Activated CD4-positive, alpha-beta memory T cell treated with anti-CD3 and anti-CD28 coated beads for 36 hours (primary cell): ENCODE measurements at regions of chr21 and their contacts with region 1.

Region 1: GRCh38 chr21:34129039-34129891 is 55.9 kb downstream of the MRPS6 start:
- DNase-seq: peak; percentile 84
- H3K4me3 Mint-ChIP-seq: peak overlapping the region; percentile 59
- H3K27ac Mint-ChIP-seq: peak overlapping the region; percentile 92
- H3K4me1 Mint-ChIP-seq: peaks cover 70% of the 10 kb centered on the region
- H3K27me3 Mint-ChIP-seq: no peaks in the 10 kb centered on the region

Region 2: DNA sequence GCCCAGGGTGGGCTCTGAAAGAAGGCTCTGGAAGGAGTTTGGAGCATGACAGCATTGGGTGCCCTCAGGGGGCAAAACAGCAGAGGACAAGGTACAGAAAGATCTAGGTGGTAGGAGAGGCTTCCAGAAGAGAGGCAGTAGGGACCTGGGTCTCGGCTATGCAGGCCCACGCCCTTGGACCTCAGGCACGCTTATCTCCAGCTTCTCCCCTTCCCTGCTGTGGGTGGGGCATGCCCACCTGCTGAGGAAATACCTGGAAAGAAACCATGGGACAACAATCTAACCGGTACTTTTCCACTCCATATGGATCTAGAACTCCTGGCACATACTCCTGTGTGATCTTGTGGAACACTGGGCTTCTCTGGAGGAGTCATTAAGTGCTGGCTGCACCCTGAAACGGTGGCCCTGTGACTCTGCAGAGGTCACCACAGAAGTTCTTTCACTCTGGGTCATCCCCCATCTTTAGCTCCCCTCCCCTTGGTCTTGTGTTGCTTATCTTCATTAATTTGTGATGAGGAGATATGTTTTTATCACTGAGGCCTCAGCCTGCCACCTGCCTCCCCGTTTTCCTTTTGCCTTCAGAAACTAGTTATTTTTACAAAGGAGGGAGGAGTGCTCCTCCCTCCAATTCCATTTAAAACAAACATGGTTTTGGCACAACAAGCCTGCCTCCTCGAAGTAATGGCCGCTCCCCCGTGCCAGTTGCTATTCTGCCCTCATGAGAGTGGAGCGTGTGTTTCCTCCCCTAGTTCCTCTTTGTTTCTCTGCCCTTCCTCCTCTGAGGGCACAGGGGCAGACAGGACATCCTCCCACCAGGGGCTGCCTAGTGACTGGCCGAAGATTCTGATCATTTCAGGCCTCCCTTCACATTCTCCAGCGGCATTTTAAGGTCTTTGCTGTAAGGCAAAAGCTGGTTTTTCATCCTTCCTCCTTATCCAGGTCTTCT is 135.7 kb before region 1 on chr21:
- CTCF ChIA-PET with region 1: no interaction called
- POLR2A ChIA-PET with region 1: no interaction called
- intact Hi-C with region 1: no loop called
- DNase-seq: no peak
- H3K4me3 Mint-ChIP-seq: no peak overlapping the region
- H3K27ac Mint-ChIP-seq: no peak overlapping the region
- H3K4me1 Mint-ChIP-seq: peaks cover 12% of the 10 kb centered on the region
- H3K27me3 Mint-ChIP-seq: no peaks in the 10 kb centered on the region

Region 3: GRCh38 chr21:34046917-34047316 is 82.3 kb before region 1 on chr21:
- CTCF ChIA-PET with region 1: no interaction called
- POLR2A ChIA-PET with region 1: no interaction called
- intact Hi-C with region 1: no loop called
- DNase-seq: no peak
- H3K4me3 Mint-ChIP-seq: no peak overlapping the region
- H3K27ac Mint-ChIP-seq: no peak overlapping the region
- H3K4me1 Mint-ChIP-seq: peaks cover 9% of the 10 kb centered on the region
- H3K27me3 Mint-ChIP-seq: peaks cover 2% of the 10 kb centered on the region

Region 4: GRCh38 chr21:34085129-34085528 is 44.1 kb before region 1 on chr21:
- CTCF ChIA-PET with region 1: no interaction called
- POLR2A ChIA-PET with region 1: no interaction called
- intact Hi-C with region 1: loop called (anchors 5 kb)
- DNase-seq: no peak
- H3K4me3 Mint-ChIP-seq: no peak overlapping the region
- H3K27ac Mint-ChIP-seq: no peak overlapping the region
- H3K4me1 Mint-ChIP-seq: peaks cover 60% of the 10 kb centered on the region
- H3K27me3 Mint-ChIP-seq: no peaks in the 10 kb centered on the region

Region 5: GRCh38 chr21:34105947-34106541 is 23.2 kb before region 1 on chr21:
- CTCF ChIA-PET with region 1: interaction called, 7 read pairs
- POLR2A ChIA-PET with region 1: no interaction called
- intact Hi-C with region 1: loop called (anchors 2 kb)
- DNase-seq: no peak
- H3K4me3 Mint-ChIP-seq: no peak overlapping the region
- H3K27ac Mint-ChIP-seq: peak overlapping the region; percentile 74
- H3K4me1 Mint-ChIP-seq: peaks cover 85% of the 10 kb centered on the region
- H3K27me3 Mint-ChIP-seq: no peaks in the 10 kb centered on the region

Region 6: DNA sequence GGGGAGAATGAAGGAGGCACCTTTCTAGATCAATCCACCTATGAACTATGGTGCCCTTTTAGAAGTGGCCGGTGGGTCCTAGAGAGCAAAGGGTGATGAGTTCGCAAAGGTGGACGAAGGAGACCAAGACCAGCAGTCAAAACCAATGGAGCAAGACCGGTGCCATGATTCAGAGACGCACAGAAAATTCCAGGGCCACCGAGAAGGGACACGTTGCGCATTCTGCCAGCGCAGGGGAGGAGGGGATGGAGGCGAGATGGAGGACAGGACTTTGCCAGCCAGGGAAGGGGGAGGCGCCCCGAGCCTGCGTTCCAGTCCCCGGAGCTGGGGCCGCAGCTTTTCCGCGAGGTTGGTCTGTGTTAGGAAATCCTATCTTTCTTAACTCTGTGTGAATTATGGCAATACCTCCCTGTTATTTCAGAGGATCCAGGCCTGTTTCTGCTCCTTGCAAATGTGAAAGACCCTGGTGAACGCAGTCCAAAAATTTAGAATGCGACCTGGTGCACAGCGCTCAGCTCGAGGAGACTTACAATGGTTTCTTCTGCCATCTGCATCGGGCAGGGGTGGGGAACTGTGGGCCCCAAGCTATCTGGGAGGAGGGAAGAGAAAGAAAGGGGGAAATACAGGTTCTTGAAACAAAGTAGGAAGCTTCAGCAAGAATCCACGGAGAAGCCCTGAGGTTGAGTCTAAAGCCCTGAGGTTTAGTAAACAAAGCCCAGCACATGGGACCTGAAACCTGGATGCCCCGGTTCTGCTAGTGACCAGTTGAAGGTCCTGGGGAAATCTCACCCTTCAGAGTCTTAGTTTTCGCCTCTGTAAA is 73.5 kb after region 1 on chr21:
- CTCF ChIA-PET with region 1: interaction called, 8 read pairs
- POLR2A ChIA-PET with region 1: interaction called, 3 read pairs
- intact Hi-C with region 1: loop called (anchors 2 kb)
- DNase-seq: no peak
- H3K4me3 Mint-ChIP-seq: no peak overlapping the region
- H3K27ac Mint-ChIP-seq: no peak overlapping the region
- H3K4me1 Mint-ChIP-seq: peaks cover 25% of the 10 kb centered on the region
- H3K27me3 Mint-ChIP-seq: peaks cover 3% of the 10 kb centered on the region

Region 7: GRCh38 chr21:35244514-35244913 is 1115.2 kb after region 1 on chr21:
- CTCF ChIA-PET with region 1: no interaction called
- POLR2A ChIA-PET with region 1: no interaction called
- intact Hi-C with region 1: no loop called
- DNase-seq: no peak
- H3K4me3 Mint-ChIP-seq: no peak overlapping the region
- H3K27ac Mint-ChIP-seq: no peak overlapping the region
- H3K4me1 Mint-ChIP-seq: no peaks in the 10 kb centered on the region
- H3K27me3 Mint-ChIP-seq: peaks cover 2% of the 10 kb centered on the region